HEK293 (cell line): ENCODE measurements at regions of chr14 and their contacts with region 1.

Region 1: GRCh38 chr14:61475316-61475715 is 153.9 kb downstream of the PRKCH start:
- H3K4me3 ChIP-seq: no peak overlapping the region
- H3K27ac ChIP-seq: no peak overlapping the region
- H3K4me1 ChIP-seq: peaks cover 18% of the 10 kb centered on the region
- CTCF ChIP-seq: no peak

Region 2: DNA sequence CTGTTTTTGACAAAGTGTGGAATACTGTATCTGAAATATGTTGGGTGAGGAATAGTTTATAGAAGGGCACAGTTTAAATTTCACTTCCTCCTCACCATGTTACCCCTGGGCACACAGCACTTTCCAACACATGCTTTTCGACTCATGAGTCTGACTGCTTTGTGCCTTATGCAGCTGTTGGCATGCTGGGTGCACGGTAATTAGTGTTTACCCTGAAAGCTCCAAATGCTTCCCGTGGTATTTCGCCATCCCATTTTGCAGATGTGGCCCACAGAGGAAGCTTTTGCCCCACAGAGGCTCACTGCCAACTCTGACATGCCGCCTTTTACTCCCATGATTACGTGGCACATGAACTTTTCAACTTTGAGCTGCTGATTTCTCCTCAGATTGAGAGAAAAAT is 14.6 kb after region 1 on chr14:
- CTCF ChIA-PET with region 1: interaction called, 14 read pairs
- POLR2A ChIA-PET with region 1: no interaction called
- H3K4me3 ChIP-seq: no peak overlapping the region
- H3K27ac ChIP-seq: no peak overlapping the region
- H3K4me1 ChIP-seq: no peaks in the 10 kb centered on the region
- CTCF ChIP-seq: no peak

Region 3: DNA sequence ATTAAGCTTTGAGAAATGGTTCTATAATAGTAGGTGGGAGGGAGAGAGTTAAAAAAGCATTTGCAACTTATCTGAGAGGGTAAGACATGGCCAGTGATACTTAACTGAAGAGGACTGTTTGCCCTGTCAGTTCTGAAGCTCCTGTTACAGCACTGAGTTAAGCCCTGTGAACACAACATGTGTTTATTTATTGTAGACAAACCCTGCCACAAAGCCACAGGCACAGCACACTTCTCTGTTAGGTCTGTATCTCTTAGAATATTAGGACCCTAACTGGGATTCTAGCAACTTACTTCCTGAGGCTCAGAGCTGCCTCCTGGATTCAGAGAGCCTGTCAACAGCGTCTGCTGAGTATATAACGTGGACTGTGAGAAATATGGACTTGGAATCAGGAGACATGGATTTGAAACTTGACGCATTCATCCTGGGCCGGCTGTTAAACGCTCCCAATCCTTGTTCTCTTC is 85.0 kb after region 1 on chr14:
- CTCF ChIA-PET with region 1: interaction called, 11 read pairs
- POLR2A ChIA-PET with region 1: no interaction called
- H3K4me3 ChIP-seq: no peak overlapping the region
- H3K27ac ChIP-seq: 0 out of 2 replicates have a peak overlapping the region, but pooled peaks have one; percentile 11
- H3K4me1 ChIP-seq: peaks cover 25% of the 10 kb centered on the region
- CTCF ChIP-seq: no peak

Region 4: DNA sequence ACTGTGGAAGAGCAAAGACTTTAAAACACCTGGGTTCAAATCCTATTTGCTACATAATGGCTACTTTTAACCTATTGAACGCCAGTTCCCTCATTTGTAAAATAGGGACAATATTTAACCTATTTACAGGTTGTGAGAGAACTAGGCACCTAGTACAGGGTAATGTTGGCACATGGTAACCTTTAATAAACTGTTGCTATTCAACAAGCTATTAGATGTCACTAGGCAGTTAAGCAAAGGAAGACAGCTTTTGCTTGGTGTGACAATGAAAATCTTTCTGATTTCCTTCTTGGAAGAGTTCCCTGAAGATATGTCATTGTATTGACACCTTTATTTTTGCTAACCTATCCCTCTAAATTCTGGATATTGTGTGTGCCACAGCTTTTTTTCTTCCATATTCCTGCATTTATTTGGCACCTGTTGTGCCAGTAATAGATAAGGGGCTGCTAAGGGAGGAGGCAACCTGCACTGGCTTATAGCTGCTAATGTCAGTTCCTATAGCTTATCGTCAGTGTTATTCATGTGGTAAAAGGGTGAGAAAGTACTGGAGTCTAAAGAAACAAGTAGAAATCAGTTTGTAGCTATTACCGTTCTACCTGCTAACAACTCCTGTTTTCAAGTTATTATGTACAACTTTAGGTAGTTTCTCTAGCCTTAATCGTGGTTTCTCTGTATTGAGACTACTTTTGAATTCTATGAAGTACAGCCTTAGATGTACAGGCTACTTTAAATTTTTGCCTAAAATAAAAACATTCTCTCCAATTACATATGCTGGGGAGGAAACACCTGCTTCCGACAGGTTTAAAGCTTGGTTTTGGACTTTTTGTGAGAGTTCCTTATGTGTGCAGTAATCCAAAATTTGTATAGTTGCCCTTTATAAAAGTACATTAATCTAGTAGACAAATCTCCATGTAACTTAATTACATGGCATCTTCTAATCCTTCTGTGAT is 244.3 kb after region 1 on chr14:
- CTCF ChIA-PET with region 1: interaction called, 11 read pairs
- POLR2A ChIA-PET with region 1: no interaction called
- H3K4me3 ChIP-seq: no peak overlapping the region
- H3K27ac ChIP-seq: no peak overlapping the region
- H3K4me1 ChIP-seq: peaks cover 32% of the 10 kb centered on the region
- CTCF ChIP-seq: no peak